Activated naive CD4-positive, alpha-beta T cell treated with anti-CD3 and anti-CD28 coated beads for 36 hours (primary cell): ENCODE measurements at regions of chr5 and their contacts with region 1.

Region 1: GRCh38 chr5:16934123-16934522 is 2.0 kb downstream of the MYO10 start:
- DNase-seq: peak; percentile 64
- H3K4me3 Mint-ChIP-seq: peak overlapping the region; percentile 29
- H3K27ac Mint-ChIP-seq: no peak overlapping the region
- H3K4me1 Mint-ChIP-seq: peaks cover 17% of the 10 kb centered on the region
- H3K27me3 Mint-ChIP-seq: peaks cover 70% of the 10 kb centered on the region

Region 2: GRCh38 chr5:16552666-16553343 is 381.3 kb before region 1 on chr5:
- CTCF ChIA-PET with region 1: no interaction called
- intact Hi-C with region 1: no loop called
- DNase-seq: peak; percentile 83
- H3K4me3 Mint-ChIP-seq: no peak overlapping the region
- H3K27ac Mint-ChIP-seq: no peak overlapping the region
- H3K4me1 Mint-ChIP-seq: peaks cover 41% of the 10 kb centered on the region
- H3K27me3 Mint-ChIP-seq: no peaks in the 10 kb centered on the region

Region 3: GRCh38 chr5:16690243-16690852 is 243.8 kb before region 1 on chr5:
- CTCF ChIA-PET with region 1: no interaction called
- intact Hi-C with region 1: loop called (anchors 10 kb)
- DNase-seq: peak; percentile 36
- H3K4me3 Mint-ChIP-seq: no peak overlapping the region
- H3K27ac Mint-ChIP-seq: no peak overlapping the region
- H3K4me1 Mint-ChIP-seq: peaks cover 3% of the 10 kb centered on the region
- H3K27me3 Mint-ChIP-seq: no peaks in the 10 kb centered on the region

Region 4: DNA sequence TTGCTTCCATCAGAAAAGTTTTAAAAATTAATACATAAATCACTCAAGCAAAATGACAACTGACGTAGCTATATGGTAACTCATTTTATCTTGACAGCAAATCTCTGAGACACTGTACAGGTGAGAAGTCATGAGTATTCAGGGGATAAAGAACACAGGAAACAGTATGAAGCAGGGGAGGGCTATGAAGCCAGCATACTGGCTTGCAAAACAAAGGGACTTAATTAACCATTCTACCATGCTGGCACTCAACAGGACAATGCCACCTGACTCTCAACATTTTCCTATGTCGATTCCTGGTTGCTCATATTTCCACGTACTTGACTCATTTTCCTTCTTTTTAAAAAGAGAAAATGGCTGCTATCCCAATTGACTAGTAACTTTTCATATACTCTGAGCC is 165.9 kb before region 1 on chr5:
- CTCF ChIA-PET with region 1: no interaction called
- intact Hi-C with region 1: no loop called
- DNase-seq: no peak
- H3K4me3 Mint-ChIP-seq: no peak overlapping the region
- H3K27ac Mint-ChIP-seq: no peak overlapping the region
- H3K4me1 Mint-ChIP-seq: no peaks in the 10 kb centered on the region
- H3K27me3 Mint-ChIP-seq: no peaks in the 10 kb centered on the region

Region 5: GRCh38 chr5:16791036-16791705 is 143.0 kb before region 1 on chr5:
- CTCF ChIA-PET with region 1: no interaction called
- intact Hi-C with region 1: loop called (anchors 2 kb)
- DNase-seq: peak; percentile 26
- H3K4me3 Mint-ChIP-seq: no peak overlapping the region
- H3K27ac Mint-ChIP-seq: no peak overlapping the region
- H3K4me1 Mint-ChIP-seq: peaks cover 7% of the 10 kb centered on the region
- H3K27me3 Mint-ChIP-seq: no peaks in the 10 kb centered on the region

Region 6: GRCh38 chr5:17132444-17133083 is 198.4 kb after region 1 on chr5:
- CTCF ChIA-PET with region 1: no interaction called
- intact Hi-C with region 1: loop called (anchors 1 kb)
- DNase-seq: no peak
- H3K4me3 Mint-ChIP-seq: no peak overlapping the region
- H3K27ac Mint-ChIP-seq: no peak overlapping the region
- H3K4me1 Mint-ChIP-seq: peaks cover 6% of the 10 kb centered on the region
- H3K27me3 Mint-ChIP-seq: peaks cover 23% of the 10 kb centered on the region

Region 7: DNA sequence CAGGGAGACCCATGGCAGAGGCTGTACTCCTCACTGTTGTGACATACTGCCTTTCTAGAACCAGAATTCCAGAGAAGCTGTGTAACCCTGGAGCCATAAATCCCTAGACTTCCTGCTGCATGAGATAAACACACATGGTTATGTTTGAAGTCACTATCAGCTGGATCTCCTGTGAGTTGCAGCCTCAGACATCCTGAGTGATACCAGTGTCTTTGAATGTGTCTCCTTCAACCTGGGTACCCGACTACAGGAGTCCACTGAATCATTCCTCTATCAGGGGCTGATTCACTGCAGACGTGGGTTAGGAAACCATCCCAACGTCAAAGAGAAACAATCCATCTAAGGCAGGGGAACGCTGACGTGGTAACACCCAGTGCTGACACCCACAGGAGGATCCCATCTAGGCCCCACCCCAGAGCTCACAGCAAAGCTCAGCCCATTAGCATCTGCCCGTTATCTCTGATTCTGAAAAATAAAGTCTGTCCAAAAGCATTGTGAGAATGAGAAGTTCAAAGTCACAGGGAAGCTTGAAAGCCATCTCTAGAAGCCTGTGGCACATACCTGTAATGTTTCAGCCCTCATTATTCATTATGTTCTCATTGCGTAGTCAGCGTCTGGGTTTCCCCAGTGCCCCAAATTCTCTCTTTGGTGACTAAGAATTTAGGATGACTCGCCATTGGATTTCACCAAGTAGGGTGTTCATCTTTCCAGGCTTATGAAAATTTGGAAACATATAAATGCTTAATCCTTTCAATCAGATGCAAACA is 247.0 kb after region 1 on chr5:
- CTCF ChIA-PET with region 1: no interaction called
- intact Hi-C with region 1: loop called (anchors 2 kb)
- DNase-seq: peak; percentile 49
- H3K4me3 Mint-ChIP-seq: no peak overlapping the region
- H3K27ac Mint-ChIP-seq: peak overlapping the region; percentile 14
- H3K4me1 Mint-ChIP-seq: peaks cover 8% of the 10 kb centered on the region
- H3K27me3 Mint-ChIP-seq: peaks cover 2% of the 10 kb centered on the region